ENCODE measurements at regions of chr12 and their contacts with region 1.

Region 1: DNA sequence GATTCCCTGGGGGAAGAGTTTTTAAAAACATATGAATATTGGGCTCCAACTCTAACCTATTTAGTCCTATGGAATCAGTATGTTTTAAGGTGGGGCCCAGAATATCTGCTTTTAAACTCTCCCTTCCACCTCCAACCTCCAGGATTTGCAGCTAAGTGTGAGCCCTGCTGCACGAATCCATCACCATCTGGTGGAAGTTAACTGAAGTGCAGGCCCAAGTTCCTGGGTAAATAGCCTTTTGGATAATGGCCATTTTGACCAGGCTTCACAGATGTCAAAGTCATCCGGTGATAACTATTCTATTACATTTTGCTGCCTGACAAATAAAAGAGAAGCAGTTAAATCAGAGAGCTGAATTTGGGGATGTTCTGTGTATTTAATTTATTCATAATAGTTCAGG is 58.1 kb upstream of the RMST start:
- DNase-seq: no peak
- ATAC-seq: no peak
- H3K4me3 ChIP-seq: no peak overlapping the region
- H3K4me3 Mint-ChIP-seq: no peak overlapping the region
- H3K27ac ChIP-seq: no peak overlapping the region
- H3K27ac Mint-ChIP-seq: no peak overlapping the region
- H3K4me1 ChIP-seq: no peaks in the 10 kb centered on the region
- H3K4me1 Mint-ChIP-seq: no peaks in the 10 kb centered on the region
- H3K27me3 ChIP-seq: no peaks in the 10 kb centered on the region
- H3K27me3 Mint-ChIP-seq: peaks cover 0 to 5% (median 0%) of the 10 kb centered on the region in 5 donors

Region 2: GRCh38 chr12:95951515-95951914 is 1453.0 kb before region 1 on chr12:
- CTCF ChIA-PET with region 1: no interaction called
- POLR2A ChIA-PET with region 1: no interaction called
- intact Hi-C with region 1: no loop called
- DNase-seq: no peak
- ATAC-seq: no peak
- H3K4me3 ChIP-seq: no peak overlapping the region
- H3K4me3 Mint-ChIP-seq: no peak overlapping the region
- H3K27ac ChIP-seq: no peak overlapping the region
- H3K27ac Mint-ChIP-seq: no peak overlapping the region
- H3K4me1 ChIP-seq: no peaks in the 10 kb centered on the region
- H3K4me1 Mint-ChIP-seq: peaks cover 0 to 3% (median 0%) of the 10 kb centered on the region in 7 donors
- H3K27me3 ChIP-seq: no peaks in the 10 kb centered on the region
- H3K27me3 Mint-ChIP-seq: peaks cover 0 to 35% (median 4%) of the 10 kb centered on the region in 5 donors

Region 3: GRCh38 chr12:96985480-96986362 is 418.8 kb before region 1 on chr12:
- CTCF ChIA-PET with region 1: no interaction called
- POLR2A ChIA-PET with region 1: no interaction called
- intact Hi-C with region 1: loop called in 1 of 2 experiments (anchors 5 kb)
- DNase-seq: peak in 8 of 9 donors; percentile 23 to 61 (median 48)
- ATAC-seq: peak; percentile 89
- H3K4me3 ChIP-seq: peak overlapping the region; percentile 52
- H3K4me3 Mint-ChIP-seq: peak overlapping the region; percentile 60 to 90 (median 84)
- H3K27ac ChIP-seq: no peak overlapping the region
- H3K27ac Mint-ChIP-seq: peak overlapping the region in 1 of 9 donors; percentile 49
- H3K4me1 ChIP-seq: peaks cover 0 to 4% of the 10 kb centered on the region in 2 donors
- H3K4me1 Mint-ChIP-seq: peaks cover 7 to 9% (median 8%) of the 10 kb centered on the region in 7 donors
- H3K27me3 ChIP-seq: no peaks in the 10 kb centered on the region
- H3K27me3 Mint-ChIP-seq: peaks cover 13 to 47% (median 33%) of the 10 kb centered on the region in 5 donors

Region 4: GRCh38 chr12:97446895-97447294 is 42.4 kb after region 1 on chr12:
- CTCF ChIA-PET with region 1: no interaction called
- POLR2A ChIA-PET with region 1: no interaction called
- intact Hi-C with region 1: no loop called
- DNase-seq: no peak
- ATAC-seq: no peak
- H3K4me3 ChIP-seq: no peak overlapping the region
- H3K4me3 Mint-ChIP-seq: no peak overlapping the region
- H3K27ac ChIP-seq: no peak overlapping the region
- H3K27ac Mint-ChIP-seq: no peak overlapping the region
- H3K4me1 ChIP-seq: no peaks in the 10 kb centered on the region
- H3K4me1 Mint-ChIP-seq: no peaks in the 10 kb centered on the region
- H3K27me3 ChIP-seq: no peaks in the 10 kb centered on the region
- H3K27me3 Mint-ChIP-seq: peaks cover 0 to 12% (median 5%) of the 10 kb centered on the region in 5 donors